ENCODE measurements at regions of chr20 and their contacts with region 1.

Region 1: GRCh38 chr20:22691369-22692118 is 107.2 kb upstream of the FOXA2 start:
- DNase-seq: peak; percentile 43
- H3K4me3 ChIP-seq: no peak overlapping the region
- H3K27ac ChIP-seq: no peak overlapping the region
- H3K4me1 ChIP-seq: peaks cover 6% of the 10 kb centered on the region
- H3K27me3 ChIP-seq: no peaks in the 10 kb centered on the region
- CTCF ChIP-seq: peak; percentile 87 to 90

Region 2: DNA sequence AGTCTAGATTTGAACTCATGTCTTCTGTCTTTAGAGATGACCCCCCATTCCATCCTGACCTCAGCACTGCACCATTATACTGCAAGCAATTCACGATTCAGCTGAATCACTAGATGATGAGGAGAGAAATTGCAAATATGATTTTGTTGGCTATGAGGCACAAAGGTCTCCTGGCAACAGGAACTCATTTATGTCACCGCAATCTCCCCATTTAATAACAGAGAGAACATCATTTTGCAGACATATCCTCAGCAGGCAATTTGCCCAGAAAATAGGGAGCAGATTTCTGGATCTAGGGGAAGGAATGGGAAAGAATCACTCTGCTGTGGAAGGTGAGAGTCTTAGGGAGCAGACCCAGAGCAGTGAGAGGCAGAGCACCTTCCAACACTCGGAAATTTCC is 683.1 kb before region 1 on chr20:
- CTCF ChIA-PET with region 1: no interaction called
- dilution Hi-C with region 1: no loop called
- in situ Hi-C with region 1: no loop called
- intact Hi-C with region 1: no loop called
- DNase-seq: no peak
- H3K4me3 ChIP-seq: no peak overlapping the region
- H3K27ac ChIP-seq: no peak overlapping the region
- H3K4me1 ChIP-seq: no peaks in the 10 kb centered on the region
- H3K27me3 ChIP-seq: no peaks in the 10 kb centered on the region
- CTCF ChIP-seq: no peak

Region 3: DNA sequence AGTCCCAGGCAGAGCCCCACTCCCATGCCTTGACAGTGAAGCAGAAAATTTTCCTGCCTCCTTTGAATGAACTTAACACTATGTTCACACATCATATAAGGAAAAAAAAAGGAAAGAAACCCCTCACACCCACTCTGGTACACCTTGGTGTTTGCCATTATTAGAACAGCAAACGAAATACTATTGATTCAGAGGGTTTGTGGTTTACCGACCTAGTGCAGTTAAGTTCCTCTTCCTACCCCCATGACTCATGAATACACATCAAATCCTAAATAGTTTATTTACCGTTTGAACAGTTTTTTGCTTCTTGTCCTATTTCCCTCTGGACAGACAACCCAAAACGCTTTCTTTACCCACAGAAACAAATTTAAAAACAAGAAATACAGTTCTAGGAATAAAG is 344.8 kb before region 1 on chr20:
- CTCF ChIA-PET with region 1: no interaction called
- dilution Hi-C with region 1: no loop called
- in situ Hi-C with region 1: no loop called
- intact Hi-C with region 1: no loop called
- DNase-seq: peak; percentile 17
- H3K4me3 ChIP-seq: no peak overlapping the region
- H3K27ac ChIP-seq: no peak overlapping the region
- H3K4me1 ChIP-seq: peaks cover 6% of the 10 kb centered on the region
- H3K27me3 ChIP-seq: no peaks in the 10 kb centered on the region
- CTCF ChIP-seq: no peak

Region 4: DNA sequence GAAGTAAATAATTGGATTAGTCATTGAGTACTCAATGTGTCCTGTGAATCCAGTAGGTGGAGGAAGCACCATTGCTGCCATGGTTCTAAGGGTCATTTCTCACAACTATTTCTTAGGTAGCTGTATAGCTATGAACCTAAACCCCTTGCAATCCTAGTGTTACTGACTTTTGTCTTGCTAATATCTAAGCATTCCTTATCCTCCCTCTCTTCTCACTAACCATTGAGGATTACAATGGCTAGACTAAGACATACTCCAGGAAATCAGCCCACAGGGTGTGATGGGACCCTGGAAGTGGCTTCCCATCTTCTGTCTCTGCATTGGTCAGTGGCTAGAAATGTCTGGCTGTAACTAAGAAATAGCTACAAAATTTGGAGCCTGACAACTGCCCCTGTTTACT is 79.9 kb before region 1 on chr20:
- CTCF ChIA-PET with region 1: no interaction called
- dilution Hi-C with region 1: no loop called
- in situ Hi-C with region 1: no loop called
- intact Hi-C with region 1: no loop called
- DNase-seq: no peak
- H3K4me3 ChIP-seq: no peak overlapping the region
- H3K27ac ChIP-seq: no peak overlapping the region
- H3K4me1 ChIP-seq: peaks cover 6% of the 10 kb centered on the region
- H3K27me3 ChIP-seq: no peaks in the 10 kb centered on the region
- CTCF ChIP-seq: no peak

Region 5: GRCh38 chr20:22757424-22758183 is 66.1 kb after region 1 on chr20:
- CTCF ChIA-PET with region 1: no interaction called
- dilution Hi-C with region 1: loop called (anchors 5 kb)
- in situ Hi-C with region 1: no loop called
- intact Hi-C with region 1: no loop called
- DNase-seq: no peak
- H3K4me3 ChIP-seq: no peak overlapping the region
- H3K27ac ChIP-seq: no peak overlapping the region
- H3K4me1 ChIP-seq: peaks cover 21% of the 10 kb centered on the region
- H3K27me3 ChIP-seq: no peaks in the 10 kb centered on the region
- CTCF ChIP-seq: no peak

Region 6: DNA sequence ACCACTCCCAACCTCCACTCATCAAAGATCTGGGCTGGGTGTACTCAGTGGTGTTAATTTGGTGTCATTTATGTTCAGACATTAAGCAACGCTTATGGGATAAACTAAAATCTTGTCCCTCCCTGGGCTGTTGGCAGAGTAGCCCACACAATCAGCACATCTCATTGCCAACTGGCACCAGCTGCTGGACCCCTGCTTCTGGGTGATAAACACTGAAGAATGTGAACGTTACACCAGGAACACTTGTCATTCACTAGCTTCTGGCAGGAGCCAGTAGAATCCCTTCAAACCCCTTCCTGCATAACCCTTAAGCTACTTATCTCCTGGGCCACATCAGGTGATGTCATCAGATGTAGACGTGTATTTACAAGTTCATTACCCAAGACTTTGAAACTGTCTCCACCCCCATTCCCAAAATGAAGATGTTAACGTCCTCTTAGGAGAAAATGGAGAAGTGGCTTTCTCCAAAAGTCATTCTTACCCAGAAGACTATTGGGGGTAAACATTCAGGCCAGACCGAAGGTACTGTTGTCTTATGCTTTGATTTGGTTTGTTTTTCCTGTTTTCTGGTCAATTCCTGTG is 502.3 kb after region 1 on chr20:
- CTCF ChIA-PET with region 1: interaction called, 3 read pairs
- dilution Hi-C with region 1: no loop called
- in situ Hi-C with region 1: loop called in 1 of 2 experiments (anchors 10 kb)
- intact Hi-C with region 1: no loop called
- DNase-seq: peak; percentile 43
- H3K4me3 ChIP-seq: no peak overlapping the region
- H3K27ac ChIP-seq: no peak overlapping the region
- H3K4me1 ChIP-seq: no peaks in the 10 kb centered on the region
- H3K27me3 ChIP-seq: no peaks in the 10 kb centered on the region
- CTCF ChIP-seq: no peak

Region 7: DNA sequence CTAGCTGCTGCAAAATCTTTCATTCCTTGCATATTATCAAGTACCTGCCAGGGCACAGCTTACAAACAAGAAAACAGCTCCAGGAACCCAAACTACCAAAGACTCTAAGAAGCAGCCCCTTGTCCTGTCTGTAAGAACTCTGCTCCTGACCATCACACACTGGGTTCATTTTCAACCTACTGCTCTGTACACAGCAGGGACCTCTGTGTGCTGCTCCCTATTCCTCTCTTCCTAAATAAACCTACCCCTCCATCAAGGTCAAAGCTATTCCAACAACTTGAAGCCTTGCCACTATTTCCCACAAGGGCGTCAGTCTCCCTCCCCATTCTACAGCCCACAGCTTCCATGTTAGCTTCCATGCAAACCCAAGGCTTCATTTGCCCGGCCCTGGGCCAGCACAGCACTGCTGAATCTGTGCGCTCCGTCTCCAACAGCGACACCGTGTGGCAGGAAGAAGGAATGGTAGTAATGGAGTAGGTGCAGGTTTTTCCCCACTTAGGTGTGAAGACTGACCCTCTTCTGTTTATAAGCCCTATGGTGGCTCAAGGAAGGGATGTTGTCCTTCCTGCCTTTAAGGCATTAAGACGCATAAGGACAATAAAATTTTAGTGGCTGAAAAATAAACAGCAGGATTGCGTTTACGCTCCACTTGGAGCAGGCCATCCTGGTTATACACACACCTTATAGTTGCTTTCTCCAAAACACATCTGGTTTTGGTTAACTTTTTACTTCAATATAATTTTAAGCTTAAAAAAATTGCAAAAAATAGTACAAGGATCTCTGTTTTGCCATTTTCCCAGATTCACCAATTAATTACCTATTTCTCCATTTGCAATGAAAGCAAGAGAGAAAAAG is 543.9 kb after region 1 on chr20:
- CTCF ChIA-PET with region 1: interaction called, 4 read pairs
- dilution Hi-C with region 1: no loop called
- in situ Hi-C with region 1: no loop called
- intact Hi-C with region 1: loop called (anchors 1 kb)
- DNase-seq: peak; percentile 40
- H3K4me3 ChIP-seq: no peak overlapping the region
- H3K27ac ChIP-seq: no peak overlapping the region
- H3K4me1 ChIP-seq: no peaks in the 10 kb centered on the region
- H3K27me3 ChIP-seq: no peaks in the 10 kb centered on the region
- CTCF ChIP-seq: peak; percentile 78 to 92

Region 8: DNA sequence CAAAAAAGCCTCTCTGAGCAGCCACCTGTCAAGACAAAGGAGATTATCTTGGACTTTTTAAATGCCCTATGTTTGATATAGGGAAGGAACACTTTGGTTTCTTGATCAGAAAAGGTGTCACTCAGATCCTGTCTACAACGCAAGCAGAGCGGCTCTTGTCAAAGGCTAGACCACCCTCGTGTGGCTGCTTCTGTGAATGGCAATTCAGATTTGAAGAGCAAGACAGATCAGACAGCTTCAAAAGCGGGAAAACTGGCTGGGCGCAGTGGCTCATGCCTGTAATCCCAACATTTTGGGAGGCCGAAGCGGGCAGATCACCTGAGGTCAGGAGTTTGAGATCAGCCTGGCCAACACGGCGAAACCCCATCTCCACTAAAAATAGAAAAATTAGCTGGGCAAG is 649.0 kb after region 1 on chr20:
- CTCF ChIA-PET with region 1: interaction called, 15 read pairs
- dilution Hi-C with region 1: no loop called
- in situ Hi-C with region 1: loop called (anchors 10 kb)
- intact Hi-C with region 1: loop called (anchors 1 kb)
- DNase-seq: peak; percentile 49
- H3K4me3 ChIP-seq: no peak overlapping the region
- H3K27ac ChIP-seq: no peak overlapping the region
- H3K4me1 ChIP-seq: no peaks in the 10 kb centered on the region
- H3K27me3 ChIP-seq: no peaks in the 10 kb centered on the region
- CTCF ChIP-seq: peak; percentile 39 to 56

Measured in mammary epithelial cell (primary cell).